CD8-positive, alpha-beta memory T cell (primary cell): ENCODE measurements at regions of chr11 and their contacts with region 1.

Region 1: GRCh38 chr11:13923716-13924650 is 38.5 kb upstream of the SPON1 start:
- DNase-seq: peak in 2 of 5 donors; percentile 27 to 48
- H3K4me3 ChIP-seq: peak overlapping the region; percentile 49
- H3K4me3 Mint-ChIP-seq: peak overlapping the region; percentile 13 to 84 (median 80)
- H3K27ac ChIP-seq: peak overlapping the region; percentile 17
- H3K27ac Mint-ChIP-seq: peak overlapping the region; percentile 79 to 97 (median 96)
- H3K4me1 ChIP-seq: peaks cover 50% of the 10 kb centered on the region
- H3K4me1 Mint-ChIP-seq: peaks cover 46 to 80% (median 71%) of the 10 kb centered on the region in 3 donors
- H3K27me3 ChIP-seq: no peaks in the 10 kb centered on the region
- H3K27me3 Mint-ChIP-seq: peaks cover 0 to 3% of the 10 kb centered on the region in 2 donors

Region 2: GRCh38 chr11:13942983-13943382 is 19.0 kb after region 1 on chr11:
- CTCF ChIA-PET with region 1: interaction called, 22 read pairs
- POLR2A ChIA-PET with region 1: interaction called, 5 read pairs
- DNase-seq: no peak
- H3K4me3 ChIP-seq: no peak overlapping the region
- H3K4me3 Mint-ChIP-seq: no peak overlapping the region
- H3K27ac ChIP-seq: no peak overlapping the region
- H3K27ac Mint-ChIP-seq: peak overlapping the region in 2 of 8 donors; percentile 13 to 26
- H3K4me1 ChIP-seq: peaks cover 47% of the 10 kb centered on the region
- H3K4me1 Mint-ChIP-seq: peaks cover 30 to 62% (median 46%) of the 10 kb centered on the region in 3 donors
- H3K27me3 ChIP-seq: no peaks in the 10 kb centered on the region
- H3K27me3 Mint-ChIP-seq: peaks cover 0 to 4% of the 10 kb centered on the region in 2 donors

Region 3: DNA sequence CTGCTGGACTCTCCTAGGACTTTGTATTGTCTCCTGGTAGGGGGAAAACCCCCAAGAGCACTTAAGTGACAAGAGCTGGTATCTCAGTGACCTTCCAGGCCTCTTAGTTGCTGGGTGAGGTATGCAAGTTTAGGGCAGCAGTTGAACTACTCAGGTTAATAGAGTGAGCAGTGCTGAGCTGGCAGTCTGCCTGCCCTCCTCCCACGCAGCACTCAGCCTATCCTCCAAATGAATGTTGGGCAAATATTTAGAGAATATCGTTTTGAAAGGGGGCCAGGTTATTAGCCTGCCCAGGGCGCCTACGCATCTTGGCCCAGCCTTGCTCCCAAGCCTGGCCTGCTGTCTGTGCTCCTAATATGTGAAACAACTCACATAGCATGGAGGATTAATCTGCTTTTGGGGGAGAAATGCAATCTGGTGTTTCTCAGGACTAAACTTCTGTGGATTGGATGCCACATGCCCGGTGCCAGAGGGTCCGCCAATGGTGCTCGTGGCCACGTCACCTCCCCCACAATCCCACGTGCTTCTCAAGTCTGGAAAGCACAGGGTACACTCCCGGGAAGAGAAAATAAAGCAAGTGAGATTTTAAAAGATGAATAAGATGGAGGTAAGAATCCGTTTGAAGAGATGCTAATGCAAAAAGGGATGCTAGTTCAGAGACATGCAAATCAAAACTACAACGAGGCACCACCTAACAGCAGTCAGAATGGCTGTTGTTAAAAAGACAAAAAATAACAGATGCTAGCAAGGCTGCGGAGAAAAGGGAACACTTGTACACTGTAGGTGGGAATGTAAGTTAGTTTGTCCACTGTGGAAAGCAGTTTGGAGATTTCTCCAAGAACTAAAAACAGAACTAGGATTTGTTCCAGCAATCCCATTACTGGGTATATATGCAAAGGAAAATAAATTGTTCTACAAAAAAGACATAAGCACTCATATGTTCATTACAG is 106.3 kb after region 1 on chr11:
- CTCF ChIA-PET with region 1: no interaction called
- POLR2A ChIA-PET with region 1: no interaction called
- DNase-seq: no peak
- H3K4me3 ChIP-seq: no peak overlapping the region
- H3K4me3 Mint-ChIP-seq: no peak overlapping the region
- H3K27ac ChIP-seq: no peak overlapping the region
- H3K27ac Mint-ChIP-seq: no peak overlapping the region
- H3K4me1 ChIP-seq: no peaks in the 10 kb centered on the region
- H3K4me1 Mint-ChIP-seq: no peaks in the 10 kb centered on the region
- H3K27me3 ChIP-seq: no peaks in the 10 kb centered on the region
- H3K27me3 Mint-ChIP-seq: peaks cover 16 to 27% of the 10 kb centered on the region in 2 donors

Region 4: GRCh38 chr11:14059491-14059890 is 135.5 kb after region 1 on chr11:
- CTCF ChIA-PET with region 1: no interaction called
- POLR2A ChIA-PET with region 1: no interaction called
- DNase-seq: no peak
- H3K4me3 ChIP-seq: no peak overlapping the region
- H3K4me3 Mint-ChIP-seq: no peak overlapping the region
- H3K27ac ChIP-seq: no peak overlapping the region
- H3K27ac Mint-ChIP-seq: no peak overlapping the region
- H3K4me1 ChIP-seq: peaks cover 7% of the 10 kb centered on the region
- H3K4me1 Mint-ChIP-seq: peaks cover 10 to 19% (median 14%) of the 10 kb centered on the region in 3 donors
- H3K27me3 ChIP-seq: no peaks in the 10 kb centered on the region
- H3K27me3 Mint-ChIP-seq: peaks cover 7 to 15% of the 10 kb centered on the region in 2 donors